ENCODE measurements at regions of chr1 and their contacts with region 1.

Region 1: GRCh38 chr1:204431310-204432165 is 19.9 kb upstream of the PPP1R15B start:
- DNase-seq: peak; percentile 79
- ATAC-seq: peak; percentile 82 to 95
- H3K4me3 ChIP-seq: no peak overlapping the region
- H3K27ac ChIP-seq: peak overlapping the region; percentile 28 to 51; a peak in 4 of 6 replicates
- H3K4me1 ChIP-seq: peaks cover 22% of the 10 kb centered on the region
- CTCF ChIP-seq: peak; percentile 92
- EP300 ChIP-seq: no peak
- POLR2A ChIP-seq: 0 out of 2 replicates have a peak, but pooled peaks have one; percentile 10
- RAD21 ChIP-seq: peak; percentile 72

Region 2: DNA sequence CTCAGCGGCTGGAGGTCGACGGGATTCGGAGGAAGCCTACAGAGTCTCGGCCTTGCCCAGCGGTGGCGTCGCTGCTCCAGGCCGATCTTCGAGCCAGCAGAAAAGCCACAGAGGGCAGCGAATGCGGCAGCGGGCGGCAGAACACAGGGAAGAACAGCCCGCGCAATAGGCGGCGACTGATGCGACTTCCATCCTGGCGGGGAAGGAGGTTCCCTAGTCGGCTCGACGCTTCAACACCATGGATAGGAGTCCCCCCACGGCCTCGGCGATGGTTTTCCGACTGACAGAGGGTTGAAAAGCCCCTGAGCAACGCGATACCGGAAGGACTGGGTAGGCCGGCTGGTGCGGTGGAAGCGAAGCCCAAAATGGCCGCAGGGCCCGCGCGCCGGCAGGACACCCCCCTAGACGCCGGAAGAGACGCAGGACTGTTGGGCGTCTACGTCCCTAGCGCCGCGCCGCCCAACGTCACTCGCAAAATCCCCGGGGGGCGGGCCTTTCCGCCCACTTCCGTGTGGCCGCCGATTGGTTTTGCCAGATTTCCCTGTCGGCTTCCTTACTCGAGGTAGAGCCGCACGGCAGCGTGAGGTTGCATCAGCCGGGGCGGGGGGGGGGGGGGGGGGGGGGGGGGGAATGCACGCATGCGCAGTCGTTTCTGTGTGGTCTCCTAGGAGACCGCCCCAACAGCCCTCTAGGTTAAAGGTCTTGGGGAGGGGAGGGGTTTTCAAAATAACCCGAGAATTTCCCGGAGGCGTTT is 19.9 kb before region 1 on chr1 and contains the start of gene PPP1R15B:
- CTCF ChIA-PET with region 1: interaction called, 40 read pairs
- POLR2A ChIA-PET with region 1: interaction called, 11 read pairs
- DNase-seq: peak; percentile 94 to 99
- ATAC-seq: peak; percentile 92 to 94
- H3K4me3 ChIP-seq: peak within 1 kb of the TSS; percentile 94
- H3K27ac ChIP-seq: peak within 1 kb of the TSS; percentile 98 to 100
- H3K4me1 ChIP-seq: peaks cover 32% of the 10 kb centered on the region
- CTCF ChIP-seq: no peak
- EP300 ChIP-seq: peak in 1 of 2 experiments; percentile 30; a peak in 1 of 5 replicates
- POLR2A ChIP-seq: peak; percentile 80
- RAD21 ChIP-seq: peak in 1 of 2 experiments; percentile 10; a peak in 1 of 5 replicates
- polyA plus RNA-seq, gene PPP1R15B: 49.1 and 51.9 TPM in 2 replicates

Region 3: GRCh38 chr1:204446370-204447111 is 15.0 kb after region 1 on chr1:
- CTCF ChIA-PET with region 1: interaction called, 276 read pairs
- POLR2A ChIA-PET with region 1: no interaction called
- DNase-seq: peak; percentile 59 to 81
- ATAC-seq: peak; percentile 86 to 88
- H3K4me3 ChIP-seq: no peak overlapping the region
- H3K27ac ChIP-seq: no peak overlapping the region
- H3K4me1 ChIP-seq: peaks cover 41% of the 10 kb centered on the region
- CTCF ChIP-seq: peak; percentile 57
- EP300 ChIP-seq: no peak
- POLR2A ChIP-seq: no peak
- RAD21 ChIP-seq: peak; percentile 66 to 71

Region 4: GRCh38 chr1:204465546-204466415 is 34.2 kb after region 1 on chr1:
- CTCF ChIA-PET with region 1: interaction called, 21 read pairs
- POLR2A ChIA-PET with region 1: no interaction called
- DNase-seq: no peak
- ATAC-seq: no peak
- H3K4me3 ChIP-seq: no peak overlapping the region
- H3K27ac ChIP-seq: no peak overlapping the region
- H3K4me1 ChIP-seq: no peaks in the 10 kb centered on the region
- CTCF ChIP-seq: no peak
- EP300 ChIP-seq: no peak
- POLR2A ChIP-seq: no peak
- RAD21 ChIP-seq: no peak

Region 5: GRCh38 chr1:204480515-204480914 is 49.0 kb after region 1 on chr1:
- CTCF ChIA-PET with region 1: interaction called, 13 read pairs
- POLR2A ChIA-PET with region 1: no interaction called
- DNase-seq: no peak
- ATAC-seq: no peak
- H3K4me3 ChIP-seq: no peak overlapping the region
- H3K27ac ChIP-seq: no peak overlapping the region
- H3K4me1 ChIP-seq: peaks cover 27% of the 10 kb centered on the region
- CTCF ChIP-seq: no peak
- EP300 ChIP-seq: no peak
- POLR2A ChIP-seq: no peak
- RAD21 ChIP-seq: no peak

Region 6: DNA sequence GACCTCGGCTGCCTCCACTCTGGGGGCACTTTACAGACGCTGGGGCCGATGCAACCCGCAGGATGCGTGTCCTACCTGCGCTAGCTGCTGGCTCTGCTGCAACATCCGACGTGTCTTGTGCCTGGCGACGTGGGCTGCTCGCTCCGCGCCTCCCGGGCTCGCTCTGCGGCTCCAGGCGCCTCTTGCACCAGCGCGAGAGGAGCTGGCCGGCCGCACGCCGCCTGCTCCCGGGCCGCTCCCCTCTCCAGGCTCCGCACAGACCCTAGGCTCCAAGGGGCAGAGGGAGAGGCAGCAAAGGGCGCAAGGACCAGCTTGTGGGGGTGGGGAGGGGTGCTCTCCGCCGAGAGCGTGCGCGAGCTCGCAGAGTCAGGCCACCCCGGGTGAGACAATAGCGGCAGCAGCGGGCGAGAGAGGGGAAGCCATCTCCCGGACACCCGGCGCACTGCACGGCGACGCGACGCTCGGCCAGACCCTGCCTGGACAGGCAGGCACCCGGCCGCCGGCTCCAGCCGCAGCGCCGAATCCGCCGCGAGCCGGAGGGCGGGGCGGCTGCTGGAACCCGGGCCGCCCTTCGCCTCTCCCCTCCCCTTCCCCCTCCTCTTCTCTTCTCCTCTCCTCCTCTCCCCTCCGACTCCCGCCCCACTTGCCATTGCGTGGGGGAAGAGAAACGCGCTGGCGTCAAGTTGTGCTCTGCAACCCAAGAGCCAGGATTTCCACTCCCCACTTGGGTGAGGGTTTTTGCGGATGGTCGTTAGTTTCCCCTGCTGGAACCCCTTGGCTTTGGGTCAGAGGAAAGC is 62.9 kb after region 1 on chr1 and contains the start of gene PIK3C2B:
- CTCF ChIA-PET with region 1: interaction called, 448 read pairs
- POLR2A ChIA-PET with region 1: no interaction called
- DNase-seq: peak; percentile 85 to 97
- ATAC-seq: peak; percentile 95 to 97
- H3K4me3 ChIP-seq: peak within 1 kb of the TSS; percentile 70
- H3K27ac ChIP-seq: peak within 1 kb of the TSS; percentile 87 to 94
- H3K4me1 ChIP-seq: peaks cover 24% of the 10 kb centered on the region; the same call in 2 of the 3 replicates
- CTCF ChIP-seq: peak; percentile 20; the same call in 2 of the 3 replicates
- EP300 ChIP-seq: no peak
- POLR2A ChIP-seq: peak; percentile 93
- RAD21 ChIP-seq: peak; percentile 26 to 55; a peak in 3 of 5 replicates
- polyA plus RNA-seq, gene PIK3C2B: 9.2 and 13.0 TPM in 2 replicates